CD8-positive, alpha-beta memory T cell (primary cell): ENCODE measurements at regions of chr1 and their contacts with region 1.

Region 1: DNA sequence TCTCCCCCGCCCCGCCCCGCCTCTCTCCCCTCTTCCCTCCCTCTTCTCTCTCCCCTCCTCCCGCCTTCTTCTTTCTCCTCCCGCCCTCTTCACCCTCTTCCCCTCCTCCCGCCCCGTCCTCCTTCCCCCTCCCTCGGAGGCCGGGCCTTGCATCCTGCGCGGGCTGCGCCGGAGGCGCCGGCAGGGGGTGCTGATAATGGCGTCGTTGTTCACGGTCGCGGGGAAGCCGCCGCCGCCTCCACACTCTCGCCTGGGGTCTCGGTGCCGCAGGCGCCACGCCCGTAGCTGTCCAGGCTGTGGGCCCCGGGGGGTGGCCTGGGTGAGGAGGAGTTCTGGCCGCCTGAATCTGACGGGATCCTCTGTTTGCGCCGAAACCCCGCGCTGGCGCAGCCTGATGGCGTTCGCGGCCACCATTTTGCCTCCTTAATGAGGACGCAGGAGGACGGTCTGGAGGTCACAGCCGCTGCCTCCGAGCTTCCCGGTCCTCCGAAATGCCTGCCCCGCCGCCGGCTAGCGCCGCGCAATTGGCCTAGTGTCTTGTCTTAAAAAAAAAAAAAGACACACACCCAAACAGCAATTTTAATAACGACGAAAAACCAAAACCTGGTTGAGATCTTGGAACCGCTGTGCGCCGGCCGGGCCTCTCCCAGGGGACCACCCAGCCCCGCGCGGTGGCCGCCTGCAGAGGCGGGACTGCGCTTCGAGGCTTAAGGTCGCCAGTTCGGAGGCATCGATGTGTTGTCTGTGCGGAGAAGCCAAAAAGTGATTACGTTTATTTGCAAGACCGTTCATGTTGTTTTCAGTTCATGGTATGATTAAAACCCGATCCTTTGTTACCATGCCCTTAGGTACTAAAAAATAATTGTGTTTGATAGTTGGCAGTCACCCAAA is 106.6 kb upstream of the HNRNPU start:
- DNase-seq: peak; percentile 86 to 96 (median 95)
- H3K4me3 ChIP-seq: peak overlapping the region; percentile 69
- H3K4me3 Mint-ChIP-seq: peak overlapping the region; percentile 91 to 98 (median 93)
- H3K27ac ChIP-seq: peak overlapping the region; percentile 99
- H3K27ac Mint-ChIP-seq: peak overlapping the region; percentile 96 to 100 (median 98)
- H3K4me1 ChIP-seq: peaks cover 12% of the 10 kb centered on the region
- H3K4me1 Mint-ChIP-seq: peaks cover 16 to 29% (median 19%) of the 10 kb centered on the region in 3 donors
- H3K27me3 ChIP-seq: no peaks in the 10 kb centered on the region
- H3K27me3 Mint-ChIP-seq: no peaks in the 10 kb centered on the region

Region 2: GRCh38 chr1:244712669-244713068 is 258.2 kb before region 1 on chr1:
- CTCF ChIA-PET with region 1: no interaction called
- POLR2A ChIA-PET with region 1: no interaction called
- DNase-seq: no peak
- H3K4me3 ChIP-seq: no peak overlapping the region
- H3K4me3 Mint-ChIP-seq: no peak overlapping the region
- H3K27ac ChIP-seq: no peak overlapping the region
- H3K27ac Mint-ChIP-seq: no peak overlapping the region
- H3K4me1 ChIP-seq: no peaks in the 10 kb centered on the region
- H3K4me1 Mint-ChIP-seq: no peaks in the 10 kb centered on the region
- H3K27me3 ChIP-seq: no peaks in the 10 kb centered on the region
- H3K27me3 Mint-ChIP-seq: no peaks in the 10 kb centered on the region

Region 3: DNA sequence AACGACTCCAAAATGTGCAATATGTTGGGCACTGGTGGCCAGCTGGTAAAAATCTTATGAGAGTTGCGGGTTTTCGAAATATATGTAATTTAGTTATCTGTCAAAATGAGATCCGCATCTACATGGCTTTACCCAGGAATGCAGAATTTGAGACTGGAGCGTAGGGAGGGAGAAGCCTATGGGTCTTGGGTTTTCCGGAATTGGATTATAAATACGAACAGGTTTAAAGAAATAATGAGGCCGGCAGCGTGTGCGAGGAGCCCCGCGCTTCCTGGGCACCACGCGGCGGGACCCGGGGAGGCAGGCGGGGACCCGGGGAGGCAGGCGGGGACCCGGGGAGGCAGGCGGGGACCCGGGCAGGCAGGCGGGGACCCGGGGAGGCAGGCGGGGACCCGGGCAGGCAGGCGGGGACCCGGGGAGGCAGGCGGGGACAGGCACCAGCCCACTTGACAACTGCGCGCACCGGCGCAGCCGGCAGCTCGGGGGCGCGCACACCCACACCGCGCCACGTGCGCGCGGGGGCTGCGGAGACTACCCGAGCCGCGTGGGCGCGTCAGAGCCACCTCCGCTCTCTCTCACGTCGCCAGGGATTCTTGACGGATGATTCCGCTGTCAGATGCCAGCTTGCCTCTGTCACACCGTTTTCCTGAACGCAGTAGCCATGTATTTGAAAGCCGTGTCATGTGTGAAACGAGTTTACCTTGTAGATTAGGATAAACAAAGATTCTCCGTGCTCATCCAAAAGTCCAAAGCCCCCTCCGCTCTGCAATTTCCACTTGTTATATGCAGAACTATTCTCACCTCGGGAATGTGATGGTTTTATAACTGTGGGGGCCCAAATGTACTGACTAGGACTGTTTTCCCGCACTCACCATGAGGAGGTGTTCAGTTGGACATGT is 52.2 kb before region 1 on chr1:
- CTCF ChIA-PET with region 1: no interaction called
- POLR2A ChIA-PET with region 1: interaction called, 11 read pairs
- DNase-seq: peak; percentile 54 to 85 (median 76)
- H3K4me3 ChIP-seq: peak overlapping the region; percentile 63
- H3K4me3 Mint-ChIP-seq: peak overlapping the region; percentile 81 to 91 (median 89)
- H3K27ac ChIP-seq: no peak overlapping the region
- H3K27ac Mint-ChIP-seq: peak overlapping the region in 6 of 8 donors; percentile 22 to 85 (median 78)
- H3K4me1 ChIP-seq: peaks cover 5% of the 10 kb centered on the region
- H3K4me1 Mint-ChIP-seq: peaks cover 10 to 13% (median 12%) of the 10 kb centered on the region in 3 donors
- H3K27me3 ChIP-seq: no peaks in the 10 kb centered on the region
- H3K27me3 Mint-ChIP-seq: peaks cover 0 to 4% of the 10 kb centered on the region in 2 donors

Region 4: GRCh38 chr1:245085508-245086095 is 114.7 kb after region 1 on chr1:
- CTCF ChIA-PET with region 1: no interaction called
- POLR2A ChIA-PET with region 1: no interaction called
- DNase-seq: no peak
- H3K4me3 ChIP-seq: no peak overlapping the region
- H3K4me3 Mint-ChIP-seq: no peak overlapping the region
- H3K27ac ChIP-seq: no peak overlapping the region
- H3K27ac Mint-ChIP-seq: no peak overlapping the region
- H3K4me1 ChIP-seq: no peaks in the 10 kb centered on the region
- H3K4me1 Mint-ChIP-seq: no peaks in the 10 kb centered on the region
- H3K27me3 ChIP-seq: no peaks in the 10 kb centered on the region
- H3K27me3 Mint-ChIP-seq: no peaks in the 10 kb centered on the region